Activated CD4-positive, alpha-beta memory T cell treated with anti-CD3 and anti-CD28 coated beads for 36 hours (primary cell): ENCODE measurements at regions of chr2 and their contacts with region 1.

Region 1: DNA sequence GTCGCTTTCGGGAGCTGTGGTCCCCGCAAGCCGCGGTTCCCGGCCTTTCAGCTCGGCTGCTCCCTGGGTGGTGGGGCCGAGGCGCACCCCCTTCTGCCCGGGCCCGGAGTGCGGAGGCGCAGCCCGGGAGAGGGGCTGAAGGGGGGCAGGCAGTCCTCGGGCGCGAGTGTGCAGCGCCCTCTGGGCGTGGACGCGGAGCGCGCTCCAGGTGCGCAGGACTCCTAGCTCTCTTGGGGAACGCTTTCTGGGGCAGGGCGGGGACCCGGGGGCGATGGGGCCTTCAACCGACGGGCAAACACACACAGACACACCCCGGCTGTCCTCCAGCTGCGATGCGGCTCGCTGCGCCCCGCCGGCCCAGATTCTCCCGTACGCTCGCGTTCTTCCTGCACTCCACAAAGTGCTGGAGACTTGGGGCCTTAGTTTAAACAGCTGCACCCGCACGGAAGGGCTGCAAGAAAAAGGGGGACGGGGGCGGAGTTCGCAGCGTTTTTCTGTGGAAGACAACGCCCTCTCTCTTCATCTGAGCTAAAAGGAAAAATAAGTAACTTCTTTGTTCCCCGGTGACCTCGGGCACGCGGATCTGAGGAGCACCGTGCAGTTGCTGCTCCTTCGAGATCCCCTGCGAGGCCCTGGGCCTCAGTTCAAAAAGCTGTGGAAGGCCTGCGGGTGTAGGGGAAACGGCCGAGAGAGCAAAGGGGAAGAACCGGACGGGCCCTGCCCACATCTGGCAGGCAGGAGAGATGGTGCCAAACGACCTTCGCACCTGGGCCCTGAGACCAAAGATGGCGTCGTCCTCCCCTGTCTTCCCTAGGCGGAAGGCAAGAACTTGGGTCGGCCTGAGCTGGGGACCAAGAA is 593 bp upstream of the SDC1 start:
- DNase-seq: peak; percentile 51
- H3K4me3 Mint-ChIP-seq: peak overlapping the region; percentile 48
- H3K27ac Mint-ChIP-seq: no peak overlapping the region
- H3K4me1 Mint-ChIP-seq: peaks cover 6% of the 10 kb centered on the region
- H3K27me3 Mint-ChIP-seq: peaks cover 41% of the 10 kb centered on the region

Region 2: DNA sequence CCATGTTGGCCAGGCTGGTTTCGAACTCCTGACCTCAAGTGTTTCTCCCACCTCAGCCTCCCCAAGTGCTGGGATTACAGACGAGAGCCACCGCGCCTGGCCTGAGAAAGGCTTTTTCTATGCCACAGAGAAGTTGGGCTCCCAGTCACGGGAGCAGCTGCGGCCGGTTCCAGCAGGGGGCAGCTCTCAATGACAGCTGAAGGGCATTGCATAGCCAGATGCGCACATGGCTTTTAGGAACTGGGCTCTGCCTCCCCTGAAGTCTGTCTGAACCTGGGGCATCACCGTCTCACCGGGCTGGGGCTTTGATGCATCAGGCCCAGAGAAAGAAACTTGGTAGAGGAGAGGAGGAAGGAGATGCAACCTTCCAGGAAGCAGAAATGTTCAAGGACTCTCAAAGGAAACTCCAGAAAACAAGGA is 89.9 kb before region 1 on chr2:
- CTCF ChIA-PET with region 1: interaction called, 6 read pairs
- POLR2A ChIA-PET with region 1: no interaction called
- intact Hi-C with region 1: loop called (anchors 1 kb)
- DNase-seq: peak; percentile 59
- H3K4me3 Mint-ChIP-seq: no peak overlapping the region
- H3K27ac Mint-ChIP-seq: no peak overlapping the region
- H3K4me1 Mint-ChIP-seq: no peaks in the 10 kb centered on the region
- H3K27me3 Mint-ChIP-seq: peaks cover 8% of the 10 kb centered on the region

Region 3: DNA sequence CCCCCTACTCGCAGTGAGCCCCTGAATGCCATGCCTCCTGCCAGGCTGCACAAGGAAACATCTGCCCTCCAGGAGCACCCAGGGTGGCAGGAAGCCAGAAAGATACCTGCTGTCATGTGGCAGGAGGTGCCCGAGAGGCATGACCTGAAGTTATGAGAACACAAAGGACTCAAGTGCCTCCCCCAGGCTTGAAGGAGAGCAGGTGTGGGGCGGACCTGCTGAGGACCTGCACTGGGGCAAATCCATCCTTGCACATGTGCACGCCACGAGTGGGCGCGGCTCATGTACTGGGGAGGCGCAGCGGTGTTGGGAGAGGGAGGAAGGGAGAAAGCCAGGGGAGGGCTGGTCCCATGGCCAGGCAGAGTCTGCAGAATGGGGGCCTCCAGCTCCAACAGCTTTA is 27.5 kb before region 1 on chr2:
- CTCF ChIA-PET with region 1: no interaction called
- POLR2A ChIA-PET with region 1: no interaction called
- intact Hi-C with region 1: no loop called
- DNase-seq: no peak
- H3K4me3 Mint-ChIP-seq: no peak overlapping the region
- H3K27ac Mint-ChIP-seq: no peak overlapping the region
- H3K4me1 Mint-ChIP-seq: no peaks in the 10 kb centered on the region
- H3K27me3 Mint-ChIP-seq: no peaks in the 10 kb centered on the region